ENCODE measurements at regions of chr12 and their contacts with region 1.

Region 1: GRCh38 chr12:47032644-47033043 is 46.8 kb upstream of the PCED1B start:
- DNase-seq: peak; percentile 3
- H3K4me3 ChIP-seq: no peak overlapping the region
- H3K27ac ChIP-seq: no peak overlapping the region
- H3K4me1 ChIP-seq: no peaks in the 10 kb centered on the region
- H3K27me3 ChIP-seq: peaks cover 7% of the 10 kb centered on the region; the same call in 1 of the 2 replicates
- CTCF ChIP-seq: peak; percentile 74
- EP300 ChIP-seq: no peak
- RAD21 ChIP-seq: peak; percentile 70

Region 2: GRCh38 chr12:46891306-46891705 is 141.3 kb before region 1 on chr12:
- CTCF ChIA-PET with region 1: no interaction called
- POLR2A ChIA-PET with region 1: no interaction called
- DNase-seq: no peak
- H3K4me3 ChIP-seq: no peak overlapping the region
- H3K27ac ChIP-seq: peak overlapping the region; percentile 32 to 55; a peak in 3 of 4 replicates
- H3K4me1 ChIP-seq: peaks cover 0 to 21% of the 10 kb centered on the region in 2 experiments; a peak in 3 of 4 replicates
- H3K27me3 ChIP-seq: no peaks in the 10 kb centered on the region
- CTCF ChIP-seq: no peak
- EP300 ChIP-seq: peak in 1 of 2 experiments; percentile 61; a peak in 1 of 4 replicates
- RAD21 ChIP-seq: no peak

Region 3: GRCh38 chr12:47021298-47021697 is 11.3 kb before region 1 on chr12:
- CTCF ChIA-PET with region 1: interaction called, 11 read pairs
- POLR2A ChIA-PET with region 1: no interaction called
- DNase-seq: peak; percentile 17
- H3K4me3 ChIP-seq: no peak overlapping the region
- H3K27ac ChIP-seq: peak overlapping the region; percentile 76 to 89
- H3K4me1 ChIP-seq: peaks cover 0 to 18% of the 10 kb centered on the region in 2 experiments
- H3K27me3 ChIP-seq: no peaks in the 10 kb centered on the region
- CTCF ChIP-seq: peak; percentile 77
- EP300 ChIP-seq: peak in 1 of 2 experiments; percentile 29; a peak in 1 of 4 replicates
- RAD21 ChIP-seq: peak; percentile 75

Region 4: GRCh38 chr12:47071241-47071852 is 38.7 kb after region 1 on chr12:
- CTCF ChIA-PET with region 1: interaction called, 12 read pairs
- POLR2A ChIA-PET with region 1: no interaction called
- DNase-seq: no peak
- H3K4me3 ChIP-seq: no peak overlapping the region
- H3K27ac ChIP-seq: no peak overlapping the region
- H3K4me1 ChIP-seq: no peaks in the 10 kb centered on the region; a peak in 1 of 4 replicates
- H3K27me3 ChIP-seq: peaks cover 3% of the 10 kb centered on the region; the same call in 1 of the 2 replicates
- CTCF ChIP-seq: peak; percentile 60
- EP300 ChIP-seq: no peak
- RAD21 ChIP-seq: no peak; the same call in 1 of the 2 replicates

Region 5: GRCh38 chr12:47686645-47687240 is 654.1 kb after region 1 on chr12:
- CTCF ChIA-PET with region 1: interaction called, 11 read pairs
- POLR2A ChIA-PET with region 1: no interaction called
- DNase-seq: peak; percentile 44
- H3K4me3 ChIP-seq: no peak overlapping the region
- H3K27ac ChIP-seq: no peak overlapping the region
- H3K4me1 ChIP-seq: no peaks in the 10 kb centered on the region
- H3K27me3 ChIP-seq: no peaks in the 10 kb centered on the region
- CTCF ChIP-seq: peak; percentile 83
- EP300 ChIP-seq: no peak
- RAD21 ChIP-seq: peak; percentile 84

Measured in SK-N-SH (cell line).